Activated CD4-positive, alpha-beta T cell treated with anti-CD3 and anti-CD28 coated beads, Interleukin-2, amount 10 ng/mL, durations not matched to agents 24 days and 14 days (primary cell): ENCODE measurements at regions of chr17 and their contacts with region 1.

Region 1: DNA sequence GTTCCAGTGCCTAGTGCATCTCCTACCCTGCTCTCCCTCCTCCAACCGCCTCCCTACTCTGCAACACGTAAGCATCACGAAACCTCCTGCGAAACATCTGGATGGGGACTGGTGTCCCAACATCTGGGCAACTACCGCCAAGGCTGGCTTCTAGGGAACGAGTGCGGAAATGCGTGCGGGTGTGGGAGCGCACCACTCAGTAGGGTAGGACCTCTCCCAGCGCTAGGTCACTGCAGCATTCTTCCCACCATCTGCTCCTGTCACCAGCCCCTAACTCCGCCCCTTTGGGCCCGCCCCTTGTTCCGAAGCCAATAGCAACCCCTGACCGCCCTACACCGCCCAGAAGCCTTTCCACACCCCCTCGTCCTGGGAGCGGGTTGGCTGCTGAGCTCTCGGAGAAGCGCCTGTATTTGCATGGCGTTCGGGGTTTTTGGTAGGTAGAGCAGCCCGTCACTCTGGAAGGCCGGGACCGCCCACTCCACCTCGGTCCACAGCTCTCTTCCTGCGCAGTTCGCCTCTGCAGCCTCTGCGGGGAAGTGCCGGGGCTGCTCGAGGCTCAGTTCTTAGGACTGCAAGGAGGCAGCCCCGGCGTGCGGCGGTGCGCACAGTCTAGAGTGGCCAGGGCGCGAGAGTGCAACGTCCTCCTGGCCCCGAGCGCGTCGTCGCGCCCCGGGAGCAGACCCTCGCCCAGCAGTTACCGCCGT is at the start of gene HS3ST3B1:
- DNase-seq: peak; percentile 100
- H3K4me3 Mint-ChIP-seq: peak within 1 kb of the TSS; percentile 91
- H3K27ac Mint-ChIP-seq: peak within 1 kb of the TSS; percentile 97
- H3K4me1 Mint-ChIP-seq: peaks cover 56% of the 10 kb centered on the region
- H3K27me3 Mint-ChIP-seq: peaks cover 23% of the 10 kb centered on the region
- total RNA-seq, gene HS3ST3B1: 19.6 and 20.8 TPM in 2 replicates

Region 2: GRCh38 chr17:13017659-13018459 is 1282.9 kb before region 1 on chr17 and contains the start of gene ELAC2:
- intact Hi-C with region 1: loop called (anchors 1 kb)
- DNase-seq: peak; percentile 99
- H3K4me3 Mint-ChIP-seq: peak within 1 kb of the TSS; percentile 86
- H3K27ac Mint-ChIP-seq: peak within 1 kb of the TSS; percentile 91
- H3K4me1 Mint-ChIP-seq: peaks cover 22% of the 10 kb centered on the region
- H3K27me3 Mint-ChIP-seq: no peaks in the 10 kb centered on the region
- total RNA-seq, gene ELAC2: 97.5 and 102 TPM in 2 replicates

Region 3: GRCh38 chr17:13594762-13595598 is 705.7 kb before region 1 on chr17:
- intact Hi-C with region 1: loop called (anchors 1 kb)
- DNase-seq: peak; percentile 95
- H3K4me3 Mint-ChIP-seq: no peak overlapping the region
- H3K27ac Mint-ChIP-seq: no peak overlapping the region
- H3K4me1 Mint-ChIP-seq: peaks cover 7% of the 10 kb centered on the region
- H3K27me3 Mint-ChIP-seq: peaks cover 47% of the 10 kb centered on the region

Region 4: GRCh38 chr17:14069251-14070021 is 231.3 kb before region 1 on chr17 and contains the start of gene COX10:
- intact Hi-C with region 1: loop called (anchors 1 kb)
- DNase-seq: peak; percentile 97
- H3K4me3 Mint-ChIP-seq: peak within 1 kb of the TSS; percentile 96
- H3K27ac Mint-ChIP-seq: peak within 1 kb of the TSS; percentile 94
- H3K4me1 Mint-ChIP-seq: peaks cover 48% of the 10 kb centered on the region
- H3K27me3 Mint-ChIP-seq: no peaks in the 10 kb centered on the region
- total RNA-seq, gene COX10: 33.5 and 36.1 TPM in 2 replicates

Region 5: DNA sequence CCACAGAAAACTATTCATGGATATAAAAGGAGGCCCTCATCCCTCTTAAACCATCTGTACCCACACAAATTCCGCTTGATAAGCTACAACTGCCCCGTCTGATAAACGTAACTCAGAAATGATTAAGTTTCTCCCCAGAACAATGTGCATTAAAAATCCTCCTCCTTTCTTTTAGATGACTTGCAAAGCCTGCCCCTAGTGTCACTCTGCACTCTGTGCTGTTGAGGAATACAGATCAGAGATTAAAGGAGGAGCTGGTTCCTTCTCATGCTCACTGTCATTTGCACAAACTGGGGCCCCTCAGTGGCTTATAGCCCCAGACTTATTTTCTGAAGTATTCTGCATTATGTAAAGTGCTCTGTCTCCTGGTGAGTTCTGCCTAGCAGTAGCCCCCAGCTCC is 97.3 kb before region 1 on chr17:
- intact Hi-C with region 1: loop called (anchors 1 kb)
- DNase-seq: peak; percentile 82
- H3K4me3 Mint-ChIP-seq: peak overlapping the region; percentile 52
- H3K27ac Mint-ChIP-seq: peak overlapping the region; percentile 81
- H3K4me1 Mint-ChIP-seq: peaks cover 76% of the 10 kb centered on the region
- H3K27me3 Mint-ChIP-seq: no peaks in the 10 kb centered on the region

Region 6: GRCh38 chr17:14427900-14428647 is 127.3 kb after region 1 on chr17:
- intact Hi-C with region 1: loop called (anchors 5 kb)
- DNase-seq: peak; percentile 85
- H3K4me3 Mint-ChIP-seq: peak overlapping the region; percentile 63
- H3K27ac Mint-ChIP-seq: peak overlapping the region; percentile 81
- H3K4me1 Mint-ChIP-seq: peaks cover 33% of the 10 kb centered on the region
- H3K27me3 Mint-ChIP-seq: no peaks in the 10 kb centered on the region